Heart left ventricle (tissue), 16 donors: ENCODE measurements at regions of chr1 and their contacts with region 1.

Region 1: GRCh38 chr1:29793101-29793546 is 556.8 kb downstream of the PTPRU start:
- DNase-seq: peak; percentile 70 to 82 (median 76)
- ATAC-seq: peak in 3 of 4 donors; percentile 74 to 83 (median 82)
- H3K4me3 ChIP-seq: no peak overlapping the region
- H3K27ac ChIP-seq: no peak overlapping the region
- H3K4me1 ChIP-seq: no peaks in the 10 kb centered on the region
- H3K27me3 ChIP-seq: peaks cover 0 to 2% (median 0%) of the 10 kb centered on the region in 9 donors
- CTCF ChIP-seq: peak; percentile 68 to 88 (median 78)
- POLR2A ChIP-seq: no peak

Region 2: GRCh38 chr1:29235955-29236684 is 557.0 kb before region 1 on chr1 and contains the start of gene PTPRU:
- intact Hi-C with region 1: loop called in 3 of 10 experiments (anchors 5 to 10 kb)
- DNase-seq: peak; percentile 78 to 92 (median 84)
- ATAC-seq: peak; percentile 54 to 89 (median 80)
- H3K4me3 ChIP-seq: peak within 1 kb of the TSS; percentile 48 to 83 (median 68)
- H3K27ac ChIP-seq: peak within 1 kb of the TSS in 11 of 12 donors; percentile 15 to 72 (median 46)
- H3K4me1 ChIP-seq: peaks cover 0 to 31% (median 15%) of the 10 kb centered on the region in 12 donors
- H3K27me3 ChIP-seq: peaks cover 0 to 30% (median 0%) of the 10 kb centered on the region in 9 donors
- CTCF ChIP-seq: peak; percentile 42 to 96 (median 85)
- POLR2A ChIP-seq: peak in 1 of 2 donors; percentile 22
- total RNA-seq, gene PTPRU: 7.1 to 59.9 (median 16.2) TPM

Region 3: GRCh38 chr1:29752141-29752540 is 41.0 kb before region 1 on chr1:
- intact Hi-C with region 1: no loop called
- DNase-seq: peak in 1 of 5 donors; percentile 0
- ATAC-seq: no peak
- H3K4me3 ChIP-seq: no peak overlapping the region
- H3K27ac ChIP-seq: no peak overlapping the region
- H3K4me1 ChIP-seq: no peaks in the 10 kb centered on the region
- H3K27me3 ChIP-seq: peaks cover 0 to 27% (median 3%) of the 10 kb centered on the region in 9 donors
- CTCF ChIP-seq: no peak
- POLR2A ChIP-seq: no peak

Region 4: DNA sequence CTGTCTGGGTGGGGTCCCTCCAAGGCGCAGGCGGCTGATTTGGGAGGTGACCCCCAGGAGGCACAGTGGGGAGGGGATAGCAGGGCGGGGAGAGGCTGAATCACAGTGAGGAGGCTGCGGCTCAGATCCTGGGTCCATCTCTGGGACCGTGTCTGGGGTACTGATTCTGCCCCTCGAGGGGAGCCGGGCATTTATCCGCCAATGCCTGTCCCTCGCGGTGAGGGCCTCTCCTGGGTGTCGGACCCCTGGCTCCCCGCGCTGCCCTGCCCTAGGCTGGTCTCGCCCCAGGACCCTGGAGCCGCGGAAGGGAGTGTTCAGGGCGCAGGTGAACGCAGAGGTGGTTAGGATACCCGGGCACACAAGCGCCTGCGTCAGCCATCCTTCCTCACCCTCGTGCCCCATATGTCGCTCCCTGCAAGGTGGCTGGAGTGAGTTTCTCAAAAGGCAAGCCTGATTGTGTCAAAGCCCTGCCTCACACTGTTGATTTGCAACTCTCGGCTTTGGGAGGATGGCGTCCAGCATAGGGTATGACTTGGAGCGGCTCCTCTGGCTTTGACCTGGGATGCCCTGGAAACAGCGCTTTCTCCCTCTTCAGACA is 25.9 kb before region 1 on chr1:
- intact Hi-C with region 1: no loop called
- DNase-seq: no peak
- ATAC-seq: no peak
- H3K4me3 ChIP-seq: no peak overlapping the region
- H3K27ac ChIP-seq: no peak overlapping the region
- H3K4me1 ChIP-seq: no peaks in the 10 kb centered on the region
- H3K27me3 ChIP-seq: peaks cover 0 to 44% (median 11%) of the 10 kb centered on the region in 9 donors
- CTCF ChIP-seq: no peak
- POLR2A ChIP-seq: no peak

Region 5: DNA sequence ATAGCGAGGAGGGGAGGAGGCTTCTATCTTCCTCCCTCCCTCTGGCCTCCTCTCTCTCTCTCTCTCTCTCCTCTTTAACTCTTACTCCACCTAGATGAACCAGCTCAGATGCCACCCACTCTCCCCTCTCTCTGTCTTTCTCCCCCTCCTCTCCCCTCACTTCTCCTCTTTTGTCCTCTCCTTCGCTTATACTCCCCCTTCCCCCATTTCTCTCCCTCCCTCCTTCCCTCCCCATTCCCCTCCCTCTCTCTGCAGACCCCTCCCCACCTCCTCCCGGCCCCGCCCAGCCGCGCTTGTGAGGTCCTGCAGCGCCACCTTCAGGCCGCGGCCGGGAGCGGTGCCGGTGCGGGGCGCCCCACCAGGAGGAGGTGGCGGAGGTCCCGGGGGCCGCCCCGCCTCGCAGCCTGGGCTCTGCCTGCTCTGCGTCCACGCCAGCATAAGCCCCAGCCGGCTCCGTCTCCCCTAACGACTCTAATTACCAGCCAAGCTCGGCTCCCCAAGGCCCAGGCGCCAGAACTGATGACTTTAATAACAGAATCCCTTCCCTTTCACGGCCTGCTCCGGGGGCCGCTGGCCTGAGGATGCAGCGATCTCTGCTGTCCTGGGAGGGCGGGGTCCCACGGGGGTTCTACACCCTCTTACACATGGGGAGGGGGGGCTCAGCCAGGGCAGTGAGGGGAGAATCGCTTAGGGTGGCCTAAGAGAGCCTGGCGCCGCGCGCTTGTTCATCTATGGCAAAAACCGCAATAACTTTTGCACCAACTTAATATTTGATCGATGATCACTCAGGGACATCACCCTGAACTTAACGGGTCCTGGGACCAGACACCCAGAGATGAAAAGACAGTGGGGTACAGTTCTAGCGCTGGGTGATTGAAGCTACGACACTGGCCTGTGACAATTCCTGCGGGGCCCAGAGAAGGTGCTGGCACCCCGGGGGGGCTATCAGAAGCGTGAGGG is 293.0 kb after region 1 on chr1:
- intact Hi-C with region 1: loop called (anchors 2 to 10 kb)
- DNase-seq: peak in 4 of 5 donors; percentile 47 to 80 (median 56)
- ATAC-seq: peak in 3 of 4 donors; percentile 27 to 59 (median 47)
- H3K4me3 ChIP-seq: peak overlapping the region in 4 of 12 donors; percentile 5 to 39 (median 29)
- H3K27ac ChIP-seq: peak overlapping the region in 1 of 12 donors; percentile 4
- H3K4me1 ChIP-seq: peaks cover 4 to 42% (median 24%) of the 10 kb centered on the region in 12 donors
- H3K27me3 ChIP-seq: peaks cover 0 to 18% (median 0%) of the 10 kb centered on the region in 9 donors
- CTCF ChIP-seq: peak; percentile 31 to 76 (median 61)
- POLR2A ChIP-seq: no peak

Region 6: GRCh38 chr1:30111431-30111830 is 318.3 kb after region 1 on chr1:
- intact Hi-C with region 1: loop called in 8 of 10 experiments (anchors 2 to 10 kb)
- DNase-seq: peak in 3 of 5 donors; percentile 35 to 43 (median 39)
- ATAC-seq: peak in 3 of 4 donors; percentile 75 to 78 (median 76)
- H3K4me3 ChIP-seq: no peak overlapping the region
- H3K27ac ChIP-seq: no peak overlapping the region
- H3K4me1 ChIP-seq: no peaks in the 10 kb centered on the region
- H3K27me3 ChIP-seq: peaks cover 0 to 67% (median 16%) of the 10 kb centered on the region in 9 donors
- CTCF ChIP-seq: peak; percentile 39 to 70 (median 58)
- POLR2A ChIP-seq: no peak

Region 7: DNA sequence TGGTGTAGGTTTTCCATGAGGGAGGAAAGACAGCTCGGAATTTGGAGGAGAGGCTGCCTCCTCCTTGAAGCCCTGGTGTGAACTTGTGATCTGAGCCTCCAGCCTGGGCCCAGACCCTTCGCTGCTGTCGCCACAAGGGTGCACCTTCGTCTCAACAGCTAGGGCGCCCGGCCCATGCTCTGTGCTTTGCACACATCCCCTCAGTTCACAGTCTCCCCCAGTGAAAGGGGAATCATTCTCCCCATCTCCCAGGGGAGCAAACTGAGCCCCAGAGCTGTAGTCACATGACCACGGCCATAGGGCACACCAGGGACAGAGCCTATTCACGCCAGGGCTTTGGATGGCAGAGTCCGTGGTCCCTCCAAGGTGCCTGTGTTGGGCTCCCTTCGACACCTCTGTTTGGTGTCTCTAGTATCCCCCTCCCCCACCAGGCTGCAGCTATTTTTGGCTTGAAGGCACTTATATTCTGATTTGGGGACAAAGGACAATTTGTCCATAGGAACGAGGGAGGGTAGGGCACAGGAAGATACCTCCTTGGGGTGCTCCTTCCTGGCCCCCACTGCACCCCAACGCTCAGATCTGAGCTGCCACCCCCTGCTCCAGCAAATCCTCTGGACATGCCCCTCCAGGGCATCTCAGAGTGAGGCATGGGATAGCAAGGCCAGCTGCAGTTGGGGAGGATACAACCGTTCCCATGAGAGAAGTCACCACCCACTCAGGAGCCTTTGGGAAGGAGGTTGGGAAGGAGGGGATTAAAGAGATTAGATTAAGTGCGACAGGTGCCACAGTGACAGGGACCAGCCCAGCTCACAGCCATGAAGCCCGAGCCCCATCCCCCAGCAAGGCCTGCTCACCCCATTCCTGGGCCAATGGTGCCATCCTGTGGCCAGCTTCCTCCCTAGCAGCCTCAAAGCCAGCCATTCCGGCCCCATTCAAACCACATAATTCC is 914.6 kb after region 1 on chr1:
- intact Hi-C with region 1: loop called in 3 of 10 experiments (anchors 1 to 10 kb)
- DNase-seq: peak; percentile 66 to 81 (median 76)
- ATAC-seq: peak; percentile 82 to 90 (median 87)
- H3K4me3 ChIP-seq: no peak overlapping the region
- H3K27ac ChIP-seq: no peak overlapping the region
- H3K4me1 ChIP-seq: peaks cover 0 to 26% (median 6%) of the 10 kb centered on the region in 12 donors
- H3K27me3 ChIP-seq: peaks cover 0 to 7% (median 0%) of the 10 kb centered on the region in 9 donors
- CTCF ChIP-seq: peak; percentile 46 to 85 (median 75)
- POLR2A ChIP-seq: no peak